WTC11 (cell line): ENCODE measurements at regions of chr12 and their contacts with region 1.

Region 1: DNA sequence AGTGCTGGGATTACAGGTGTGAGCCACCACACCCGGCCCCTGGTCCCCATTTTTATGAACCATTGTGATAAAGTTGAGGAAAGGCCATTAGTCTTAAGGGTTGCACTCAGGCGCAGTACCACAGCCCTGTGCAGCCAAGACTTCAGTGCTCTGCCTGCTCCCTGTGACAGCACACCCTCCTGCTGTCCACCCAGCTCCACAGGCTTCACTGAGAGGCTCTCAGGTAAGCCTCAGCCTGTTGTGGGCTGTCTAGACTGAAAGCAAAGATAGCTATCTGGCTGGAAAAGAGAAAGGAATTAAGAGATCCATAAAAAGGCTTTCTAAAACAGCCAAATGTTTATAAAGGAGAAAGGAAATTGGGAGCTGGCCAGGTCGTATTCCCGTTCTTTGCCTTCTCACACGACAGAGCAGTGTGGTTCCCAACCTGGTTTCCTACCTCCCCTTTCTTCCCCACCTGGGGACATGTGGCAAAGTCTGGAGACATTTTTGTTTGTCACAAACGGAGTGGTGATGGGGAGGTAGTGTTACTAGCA is 19.1 kb upstream of the DNM1L start:
- DNase-seq: no peak
- ATAC-seq: no peak
- H3K4me3 Mint-ChIP-seq: no peak overlapping the region
- H3K27ac Mint-ChIP-seq: peak overlapping the region; percentile 13; the same call in 1 of the 2 replicates
- H3K4me1 Mint-ChIP-seq: no peaks in the 10 kb centered on the region
- H3K27me3 Mint-ChIP-seq: no peaks in the 10 kb centered on the region
- CTCF ChIP-seq: no peak

Region 2: DNA sequence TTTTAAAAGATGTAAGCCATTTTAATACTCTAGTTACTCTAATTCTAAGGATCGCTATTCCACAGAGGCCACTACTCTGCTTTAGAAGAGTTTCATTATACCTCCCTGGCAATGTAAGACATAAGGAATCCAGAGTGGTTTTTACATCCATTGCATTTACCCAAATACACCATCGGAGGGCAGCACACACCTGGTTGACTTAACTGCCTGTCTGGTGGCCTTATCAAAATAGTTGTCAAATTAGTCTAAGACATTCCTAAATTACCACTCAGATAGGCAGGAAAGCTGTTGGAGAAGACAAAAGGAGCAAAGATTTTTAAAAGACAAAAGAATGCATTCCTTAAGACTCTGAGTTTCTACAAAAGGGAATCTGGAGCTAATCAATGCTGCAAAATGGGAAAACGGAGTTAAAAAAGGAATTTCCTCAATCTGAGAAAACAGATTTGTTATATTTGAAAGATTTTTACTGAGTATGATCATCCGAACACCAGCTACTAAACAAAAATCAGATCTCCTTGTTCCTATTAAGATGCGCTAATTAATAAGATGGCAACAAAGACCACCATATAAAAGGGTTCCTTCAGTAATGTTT is 294.4 kb before region 1 on chr12:
- CTCF ChIA-PET with region 1: interaction called, 10 read pairs
- POLR2A ChIA-PET with region 1: no interaction called
- DNase-seq: peak; percentile 45
- ATAC-seq: peak; percentile 68
- H3K4me3 Mint-ChIP-seq: no peak overlapping the region
- H3K27ac Mint-ChIP-seq: peak overlapping the region; percentile 73
- H3K4me1 Mint-ChIP-seq: peaks cover 41% of the 10 kb centered on the region
- H3K27me3 Mint-ChIP-seq: no peaks in the 10 kb centered on the region
- CTCF ChIP-seq: peak; percentile 66

Region 3: GRCh38 chr12:32647275-32647674 is 12.7 kb before region 1 on chr12:
- CTCF ChIA-PET with region 1: interaction called, 10 read pairs
- POLR2A ChIA-PET with region 1: no interaction called
- DNase-seq: no peak
- ATAC-seq: peak; percentile 57
- H3K4me3 Mint-ChIP-seq: no peak overlapping the region
- H3K27ac Mint-ChIP-seq: no peak overlapping the region
- H3K4me1 Mint-ChIP-seq: no peaks in the 10 kb centered on the region
- H3K27me3 Mint-ChIP-seq: no peaks in the 10 kb centered on the region
- CTCF ChIP-seq: no peak

Region 4: DNA sequence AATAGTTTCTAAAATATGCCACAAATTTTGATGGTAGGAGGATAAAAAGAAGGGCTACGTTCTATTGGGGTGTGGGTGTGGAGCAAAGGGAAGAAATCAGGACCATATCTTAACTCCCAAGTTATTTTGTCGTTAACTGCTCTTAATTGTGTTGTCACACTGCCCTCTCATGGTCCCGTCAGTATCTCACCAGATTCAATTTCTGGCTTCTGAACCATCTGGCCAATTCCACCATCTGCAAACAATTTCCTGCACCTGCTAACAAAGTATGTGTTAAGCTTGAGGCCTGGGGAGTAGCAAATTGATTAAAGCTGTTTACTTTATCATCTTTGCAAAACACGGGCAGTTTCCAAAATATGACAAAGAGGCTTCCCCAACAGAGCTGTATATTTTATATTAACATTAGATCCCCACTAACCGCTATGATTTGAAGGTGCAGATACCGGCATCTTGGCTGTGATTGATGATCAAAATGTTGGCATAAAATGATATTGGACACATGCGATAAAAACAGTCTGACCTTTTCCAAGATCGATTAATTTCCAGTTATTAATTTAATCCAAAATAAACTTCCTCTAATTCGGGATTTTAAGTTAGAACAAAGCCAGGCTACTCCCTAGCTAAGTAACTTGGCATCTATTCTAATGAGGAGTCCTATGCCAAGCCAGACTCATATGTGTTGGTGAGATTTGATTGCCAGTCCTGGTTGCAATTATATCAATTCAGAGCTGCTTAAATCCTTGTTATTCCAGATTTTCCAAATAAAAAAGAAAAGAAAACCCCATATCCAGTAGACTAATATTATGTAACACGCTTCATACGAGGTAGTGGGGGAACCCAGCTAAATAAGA is 12.2 kb after region 1 on chr12:
- CTCF ChIA-PET with region 1: interaction called, 12 read pairs
- POLR2A ChIA-PET with region 1: no interaction called
- DNase-seq: no peak
- ATAC-seq: peak; percentile 92
- H3K4me3 Mint-ChIP-seq: no peak overlapping the region
- H3K27ac Mint-ChIP-seq: no peak overlapping the region
- H3K4me1 Mint-ChIP-seq: peaks cover 2% of the 10 kb centered on the region; the same call in 1 of the 2 replicates
- H3K27me3 Mint-ChIP-seq: no peaks in the 10 kb centered on the region
- CTCF ChIP-seq: peak; percentile 26; the same call in 1 of the 2 replicates